ENCODE measurements at regions of chr20 and their contacts with region 1.

Region 1: DNA sequence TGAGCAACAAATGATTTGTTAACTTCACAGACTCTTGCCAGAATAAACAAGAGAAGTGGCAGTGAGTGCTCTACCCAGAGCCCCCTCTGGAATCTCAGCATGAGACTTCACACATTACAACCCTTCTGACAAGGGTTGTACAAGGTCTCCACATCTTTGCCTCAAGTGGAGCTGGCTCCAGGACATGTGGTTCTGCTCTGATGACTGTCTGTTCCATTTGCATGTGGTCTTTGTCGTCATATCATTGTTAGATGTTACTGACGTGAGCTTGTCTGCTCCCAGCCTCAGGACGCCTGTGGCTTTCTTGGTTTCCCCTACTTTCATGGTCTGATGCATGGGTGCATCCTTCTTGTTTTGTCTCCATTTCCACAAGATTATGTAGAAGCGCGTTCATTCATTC is 115.0 kb downstream of the SLC24A3 start:
- DNase-seq: no peak
- H3K4me3 ChIP-seq: no peak overlapping the region
- H3K27ac ChIP-seq: no peak overlapping the region
- H3K4me1 ChIP-seq: no peaks in the 10 kb centered on the region
- H3K27me3 ChIP-seq: no peaks in the 10 kb centered on the region
- CTCF ChIP-seq: no peak

Region 2: DNA sequence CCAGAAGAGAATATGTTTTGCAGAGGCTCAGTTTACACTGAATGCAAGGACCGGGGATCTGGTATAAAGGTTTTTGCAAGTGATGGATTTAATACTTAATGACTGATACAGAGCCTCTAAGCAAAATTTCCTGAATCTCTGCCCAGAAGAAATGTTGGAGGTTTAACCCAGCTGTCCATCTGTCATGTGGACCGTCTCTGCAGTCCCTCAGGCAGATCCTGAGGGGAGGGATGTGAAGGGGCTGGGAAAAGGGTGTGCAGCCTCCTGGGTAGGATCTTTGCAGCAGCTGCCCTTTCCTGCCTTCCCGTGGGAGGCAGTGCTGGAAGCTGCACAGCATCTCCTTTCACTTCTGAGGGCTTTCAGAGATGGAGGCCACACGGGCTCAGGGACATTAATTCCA is 92.0 kb after region 1 on chr20:
- CTCF ChIA-PET with region 1: no interaction called
- dilution Hi-C with region 1: loop called (anchors 5 kb)
- in situ Hi-C with region 1: no loop called
- intact Hi-C with region 1: no loop called
- DNase-seq: no peak
- H3K4me3 ChIP-seq: no peak overlapping the region
- H3K27ac ChIP-seq: no peak overlapping the region
- H3K4me1 ChIP-seq: no peaks in the 10 kb centered on the region
- H3K27me3 ChIP-seq: no peaks in the 10 kb centered on the region
- CTCF ChIP-seq: no peak